T-cell (primary cell): ENCODE measurements at regions of chr7 and their contacts with region 1.

Region 1: DNA sequence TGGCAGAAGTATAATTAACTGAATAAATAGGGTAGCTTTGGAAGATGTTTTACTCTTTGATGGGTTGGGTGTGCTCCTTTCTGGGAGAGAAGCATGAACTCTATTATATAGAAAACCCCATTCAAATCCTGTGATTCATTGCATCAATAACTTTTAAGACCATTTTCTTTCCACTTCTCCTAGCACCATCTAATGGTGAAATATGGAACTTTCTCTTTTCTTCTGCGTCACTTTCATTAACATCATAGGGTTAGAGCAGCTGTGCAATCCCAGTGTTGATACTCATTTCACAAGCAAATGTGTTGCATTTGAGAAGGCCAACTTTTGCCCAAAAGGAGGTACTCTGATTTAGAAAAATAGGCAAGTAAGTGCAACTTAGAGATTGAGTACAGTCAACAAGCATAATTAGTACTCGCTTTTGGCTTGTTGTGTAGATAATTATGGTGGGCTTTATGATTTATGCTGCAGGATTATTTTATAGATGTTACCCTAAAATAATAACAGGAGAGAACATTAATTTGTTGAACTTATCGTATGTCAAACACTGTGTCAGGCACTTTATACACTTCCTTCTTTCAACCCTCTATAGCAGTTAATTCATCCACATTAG is 92.9 kb downstream of the CPED1 start:
- DNase-seq: peak in 2 of 35 experiments; percentile 4 to 64
- ATAC-seq: peak; percentile 61 to 67 (median 62)
- H3K4me3 ChIP-seq: no peak overlapping the region
- H3K4me3 Mint-ChIP-seq: no peak overlapping the region
- H3K27ac ChIP-seq: no peak overlapping the region
- H3K27ac Mint-ChIP-seq: no peak overlapping the region
- H3K4me1 ChIP-seq: no peaks in the 10 kb centered on the region
- H3K4me1 Mint-ChIP-seq: no peaks in the 10 kb centered on the region
- H3K27me3 ChIP-seq: no peaks in the 10 kb centered on the region
- H3K27me3 Mint-ChIP-seq: peaks cover 14 to 27% of the 10 kb centered on the region in 2 donors

Region 2: GRCh38 chr7:120987683-120988590 is 93.5 kb before region 1 on chr7:
- CTCF ChIA-PET with region 1: interaction called, 4 to 14 read pairs
- POLR2A ChIA-PET with region 1: no interaction called
- DNase-seq: peak; percentile 65 to 93 (median 84)
- ATAC-seq: peak; percentile 97 to 99 (median 98)
- H3K4me3 ChIP-seq: peak overlapping the region in 1 of 2 donors; percentile 28
- H3K4me3 Mint-ChIP-seq: peak overlapping the region; percentile 43 to 74 (median 60)
- H3K27ac ChIP-seq: no peak overlapping the region
- H3K27ac Mint-ChIP-seq: no peak overlapping the region
- H3K4me1 ChIP-seq: peaks cover 9 to 15% of the 10 kb centered on the region in 2 experiments
- H3K4me1 Mint-ChIP-seq: peaks cover 18 to 21% (median 21%) of the 10 kb centered on the region in 3 donors
- H3K27me3 ChIP-seq: peaks cover 0 to 24% of the 10 kb centered on the region in 2 experiments
- H3K27me3 Mint-ChIP-seq: peaks cover 45 to 55% of the 10 kb centered on the region in 2 donors

Region 3: GRCh38 chr7:121062671-121063279 is 18.7 kb before region 1 on chr7:
- CTCF ChIA-PET with region 1: interaction called, 3 to 6 read pairs
- POLR2A ChIA-PET with region 1: interaction called in 1 of 2 experiments, 14 read pairs
- DNase-seq: no peak
- ATAC-seq: no peak
- H3K4me3 ChIP-seq: no peak overlapping the region
- H3K4me3 Mint-ChIP-seq: no peak overlapping the region
- H3K27ac ChIP-seq: no peak overlapping the region
- H3K27ac Mint-ChIP-seq: no peak overlapping the region
- H3K4me1 ChIP-seq: no peaks in the 10 kb centered on the region
- H3K4me1 Mint-ChIP-seq: no peaks in the 10 kb centered on the region
- H3K27me3 ChIP-seq: peaks cover 0 to 2% of the 10 kb centered on the region in 2 experiments
- H3K27me3 Mint-ChIP-seq: peaks cover 2 to 13% of the 10 kb centered on the region in 2 donors